Activated B cell treated with CpG ODN at 0.5 μM for 24 hours (primary cell): ENCODE measurements at regions of chr1 and their contacts with region 1.

Region 1: GRCh38 chr1:178684542-178685000 is 40.5 kb upstream of the RALGPS2 start:
- DNase-seq: no peak
- ATAC-seq: peak; percentile 50
- H3K4me3 Mint-ChIP-seq: peak overlapping the region; percentile 32
- H3K27ac Mint-ChIP-seq: peak overlapping the region; percentile 61
- H3K4me1 Mint-ChIP-seq: peaks cover 52% of the 10 kb centered on the region
- H3K27me3 Mint-ChIP-seq: no peaks in the 10 kb centered on the region
- CTCF ChIP-seq: no peak

Region 2: GRCh38 chr1:178566187-178566586 is 118.4 kb before region 1 on chr1:
- CTCF ChIA-PET with region 1: no interaction called
- POLR2A ChIA-PET with region 1: interaction called, 13 read pairs
- intact Hi-C with region 1: no loop called
- DNase-seq: no peak
- ATAC-seq: peak; percentile 52
- H3K4me3 Mint-ChIP-seq: no peak overlapping the region
- H3K27ac Mint-ChIP-seq: peak overlapping the region; percentile 68
- H3K4me1 Mint-ChIP-seq: peaks cover 74% of the 10 kb centered on the region
- H3K27me3 Mint-ChIP-seq: no peaks in the 10 kb centered on the region
- CTCF ChIP-seq: no peak

Region 3: GRCh38 chr1:178664278-178664677 is 20.3 kb before region 1 on chr1:
- CTCF ChIA-PET with region 1: interaction called, 5 read pairs
- POLR2A ChIA-PET with region 1: no interaction called
- intact Hi-C with region 1: loop called (anchors 1 kb)
- DNase-seq: peak; percentile 28
- ATAC-seq: peak; percentile 83
- H3K4me3 Mint-ChIP-seq: peak overlapping the region; percentile 69
- H3K27ac Mint-ChIP-seq: peak overlapping the region; percentile 86
- H3K4me1 Mint-ChIP-seq: peaks cover 91% of the 10 kb centered on the region
- H3K27me3 Mint-ChIP-seq: no peaks in the 10 kb centered on the region
- CTCF ChIP-seq: no peak

Region 4: GRCh38 chr1:178716111-178716510 is 31.5 kb after region 1 on chr1:
- CTCF ChIA-PET with region 1: no interaction called
- POLR2A ChIA-PET with region 1: interaction called, 6 read pairs
- intact Hi-C with region 1: loop called (anchors 5 kb)
- DNase-seq: no peak
- ATAC-seq: no peak
- H3K4me3 Mint-ChIP-seq: no peak overlapping the region
- H3K27ac Mint-ChIP-seq: no peak overlapping the region
- H3K4me1 Mint-ChIP-seq: peaks cover 45% of the 10 kb centered on the region
- H3K27me3 Mint-ChIP-seq: no peaks in the 10 kb centered on the region
- CTCF ChIP-seq: no peak

Region 5: DNA sequence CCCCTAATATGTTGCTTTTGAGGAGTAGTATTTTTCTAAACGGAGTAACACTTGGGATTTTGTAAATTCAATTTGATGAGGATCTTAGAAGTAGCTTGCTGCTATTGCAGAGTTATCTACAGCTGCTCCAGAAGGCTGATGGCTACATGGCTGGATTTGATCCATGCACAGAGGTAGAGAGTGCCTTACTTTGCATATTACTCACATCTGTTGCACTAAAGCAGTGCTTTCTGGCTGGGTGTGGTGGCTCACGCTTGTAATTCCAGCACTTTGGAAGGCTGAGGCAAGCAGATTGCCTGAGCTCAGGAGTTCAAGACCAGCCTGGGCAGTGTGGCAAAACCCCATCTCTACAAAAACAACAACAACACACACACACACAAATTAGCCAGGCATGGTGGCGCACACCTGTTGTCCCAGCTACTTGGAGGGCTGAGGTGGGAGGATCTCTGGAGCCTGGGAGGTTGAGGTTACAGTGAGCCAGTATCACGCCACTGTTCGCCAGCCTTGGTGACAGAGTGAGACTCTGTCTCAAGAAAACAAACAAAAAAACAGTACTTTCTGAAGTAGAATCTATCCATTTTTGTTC is 65.1 kb after region 1 on chr1:
- CTCF ChIA-PET with region 1: no interaction called
- POLR2A ChIA-PET with region 1: no interaction called
- intact Hi-C with region 1: no loop called
- DNase-seq: no peak
- ATAC-seq: peak; percentile 38
- H3K4me3 Mint-ChIP-seq: no peak overlapping the region
- H3K27ac Mint-ChIP-seq: peak overlapping the region; percentile 83
- H3K4me1 Mint-ChIP-seq: peaks cover 64% of the 10 kb centered on the region
- H3K27me3 Mint-ChIP-seq: no peaks in the 10 kb centered on the region
- CTCF ChIP-seq: no peak